ENCODE measurements at regions of chr17 and their contacts with region 1.

Region 1: DNA sequence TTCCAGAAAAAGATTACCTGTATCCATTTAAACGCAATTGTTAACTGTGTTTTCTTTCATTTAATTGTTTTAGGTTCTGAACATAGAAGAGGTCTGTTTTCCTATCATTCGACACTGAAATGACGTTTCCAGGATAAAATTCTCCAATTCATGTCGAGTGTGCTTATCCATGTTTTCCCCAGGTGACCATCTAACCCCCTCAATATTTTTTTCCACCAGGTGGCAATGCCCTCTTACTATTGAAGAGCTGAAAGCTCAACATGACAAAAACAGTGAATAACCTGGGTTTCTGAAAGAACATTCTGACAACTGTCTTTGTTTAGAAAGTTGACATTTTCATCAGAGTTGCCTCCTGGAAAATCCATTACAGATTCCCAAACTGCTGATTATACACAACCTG is 948.7 kb downstream of the KCNJ2 start:
- DNase-seq: peak; percentile 52
- H3K4me3 Mint-ChIP-seq: no peak overlapping the region
- H3K27ac Mint-ChIP-seq: no peak overlapping the region
- H3K4me1 Mint-ChIP-seq: peaks cover 9% of the 10 kb centered on the region
- H3K27me3 Mint-ChIP-seq: no peaks in the 10 kb centered on the region
- CTCF ChIP-seq: no peak

Region 2: GRCh38 chr17:71032746-71033273 is 85.2 kb before region 1 on chr17:
- CTCF ChIA-PET with region 1: no interaction called
- intact Hi-C with region 1: no loop called
- DNase-seq: no peak
- H3K4me3 Mint-ChIP-seq: no peak overlapping the region
- H3K27ac Mint-ChIP-seq: no peak overlapping the region
- H3K4me1 Mint-ChIP-seq: no peaks in the 10 kb centered on the region
- H3K27me3 Mint-ChIP-seq: no peaks in the 10 kb centered on the region
- CTCF ChIP-seq: no peak

Region 3: GRCh38 chr17:71052971-71053370 is 65.1 kb before region 1 on chr17:
- CTCF ChIA-PET with region 1: no interaction called
- intact Hi-C with region 1: no loop called
- DNase-seq: no peak
- H3K4me3 Mint-ChIP-seq: no peak overlapping the region
- H3K27ac Mint-ChIP-seq: no peak overlapping the region
- H3K4me1 Mint-ChIP-seq: no peaks in the 10 kb centered on the region
- H3K27me3 Mint-ChIP-seq: no peaks in the 10 kb centered on the region
- CTCF ChIP-seq: no peak

Region 4: GRCh38 chr17:71460943-71461342 is 342.9 kb after region 1 on chr17:
- CTCF ChIA-PET with region 1: interaction called, 3 read pairs
- intact Hi-C with region 1: loop called (anchors 2 kb)
- DNase-seq: peak; percentile 44
- H3K4me3 Mint-ChIP-seq: no peak overlapping the region
- H3K27ac Mint-ChIP-seq: no peak overlapping the region
- H3K4me1 Mint-ChIP-seq: no peaks in the 10 kb centered on the region
- H3K27me3 Mint-ChIP-seq: no peaks in the 10 kb centered on the region
- CTCF ChIP-seq: peak; percentile 21

Measured in Calu3 (cell line).